ENCODE measurements at regions of chr7 and their contacts with region 1.

Region 1: GRCh38 chr7:121837462-121837861 is 35.5 kb upstream of the PTPRZ1 start:
- DNase-seq: no peak
- H3K4me3 ChIP-seq: no peak overlapping the region
- H3K27ac ChIP-seq: no peak overlapping the region
- H3K27me3 ChIP-seq: peaks cover 0 to 69% (median 11%) of the 10 kb centered on the region in 45 donors
- CTCF ChIP-seq: no peak

Region 2: DNA sequence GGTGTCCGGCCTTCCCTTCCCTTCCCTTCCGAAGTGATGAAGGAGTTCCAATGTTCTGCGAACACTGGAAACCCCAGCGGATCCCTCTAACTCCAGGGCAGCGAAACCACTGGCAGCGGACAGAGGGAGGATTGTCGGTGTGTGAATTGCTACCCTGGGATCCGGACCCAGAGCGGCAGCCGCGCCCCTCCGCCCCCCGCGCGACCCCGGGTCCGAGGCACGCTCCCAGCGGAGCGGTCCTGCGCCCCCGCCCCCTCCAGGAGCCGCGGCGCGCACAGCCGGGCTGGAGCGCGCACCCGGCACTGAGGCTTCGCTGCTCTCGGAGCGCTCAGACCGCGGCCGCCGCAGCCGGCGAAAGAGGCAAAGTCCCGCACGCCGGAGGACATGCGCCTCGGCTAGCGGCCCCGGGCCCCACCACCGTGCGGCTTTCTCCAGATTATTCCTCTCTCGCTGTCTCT is 35.4 kb after region 1 on chr7 and contains the start of gene PTPRZ1:
- intact Hi-C with region 1: loop called in 1 of 2 experiments (anchors 5 kb)
- DNase-seq: peak; percentile 16 to 61 (median 34)
- H3K4me3 ChIP-seq: peak within 1 kb of the TSS; percentile 39 to 81 (median 62)
- H3K27ac ChIP-seq: peak within 1 kb of the TSS in 50 of 59 donors; percentile 2 to 88 (median 68)
- H3K27me3 ChIP-seq: peaks cover 0 to 75% (median 30%) of the 10 kb centered on the region in 45 donors
- CTCF ChIP-seq: no peak
- total RNA-seq, gene PTPRZ1: 80.1 to 321 (median 135) TPM